GM12878 (cell line): ENCODE measurements at regions of chr7 and their contacts with region 1.

Region 1: DNA sequence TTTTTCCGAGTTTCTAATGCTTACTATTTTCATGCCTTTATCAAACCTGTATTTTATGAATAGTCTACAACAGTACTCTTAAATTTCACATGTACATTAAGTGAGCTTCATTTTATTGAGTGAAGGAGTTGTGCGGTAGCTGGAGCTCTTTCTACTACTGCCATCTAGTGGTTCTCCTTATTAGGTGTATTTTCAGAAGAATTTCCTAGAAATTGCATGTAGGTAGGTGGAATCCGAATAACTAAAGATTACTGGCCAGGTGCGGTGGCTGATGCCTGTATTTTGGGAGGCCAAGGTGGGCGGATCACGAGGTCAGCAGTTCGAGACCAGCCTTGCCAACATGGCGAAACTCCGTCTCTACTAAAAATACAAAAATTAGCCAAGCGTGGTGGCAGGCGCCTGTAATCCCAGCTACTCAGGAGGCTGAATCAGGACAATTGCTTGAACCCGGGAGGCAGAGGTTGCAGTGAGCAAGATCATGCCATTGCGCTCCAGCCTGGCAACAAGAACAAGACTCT is 38.3 kb downstream of the LRRC72 start:
- DNase-seq: peak; percentile 8
- ATAC-seq: peak; percentile 80
- H3K4me3 ChIP-seq: no peak overlapping the region
- H3K27ac ChIP-seq: no peak overlapping the region
- H3K4me1 ChIP-seq: no peaks in the 10 kb centered on the region
- H3K27me3 ChIP-seq: no peaks in the 10 kb centered on the region; a peak in 1 of 4 replicates
- CTCF ChIP-seq: peak; percentile 58 to 64 (median 61); a peak in 5 of 6 replicates
- EP300 ChIP-seq: no peak
- POLR2A ChIP-seq: no peak
- RAD21 ChIP-seq: peak; percentile 81

Region 2: DNA sequence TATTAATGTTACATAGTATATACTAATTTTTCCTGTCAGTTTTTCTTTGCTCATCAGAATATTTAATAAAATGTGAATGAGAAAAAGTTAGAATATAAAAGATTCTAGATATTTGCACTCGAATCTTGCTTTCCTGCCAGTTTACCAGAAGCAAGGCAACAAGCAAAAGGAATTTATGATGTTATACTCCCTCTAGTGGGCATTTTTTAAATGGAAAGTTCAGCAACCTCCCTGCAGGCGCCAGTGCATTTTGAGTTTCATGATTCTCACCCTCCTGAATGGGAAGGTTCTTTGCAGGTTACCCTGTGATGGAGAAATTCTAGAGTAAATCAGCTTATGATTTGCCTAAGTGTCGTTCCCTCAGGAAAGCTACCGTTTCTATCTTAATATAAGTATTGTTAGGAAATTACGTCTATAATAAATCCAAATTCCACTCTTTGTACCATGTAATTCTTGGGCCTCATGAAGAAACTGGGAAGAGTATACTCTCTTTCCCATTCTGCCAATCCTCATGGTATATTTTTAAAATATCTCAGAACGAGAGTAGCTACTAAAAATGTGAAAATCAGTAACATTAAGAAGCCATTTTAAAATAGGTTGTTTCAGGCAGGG is 493.6 kb before region 1 on chr7:
- CTCF ChIA-PET with region 1: interaction called, 17 read pairs
- POLR2A ChIA-PET with region 1: no interaction called
- RAD21 ChIA-PET with region 1: interaction called, 6 read pairs
- SMC1A ChIA-PET with region 1: interaction called, 3 read pairs
- in situ Hi-C with region 1: no loop called
- intact Hi-C with region 1: no loop called
- DNase-seq: no peak
- ATAC-seq: peak; percentile 85
- H3K4me3 ChIP-seq: no peak overlapping the region
- H3K27ac ChIP-seq: no peak overlapping the region
- H3K4me1 ChIP-seq: no peaks in the 10 kb centered on the region
- H3K27me3 ChIP-seq: no peaks in the 10 kb centered on the region
- CTCF ChIP-seq: peak; percentile 40 to 66 (median 65); a peak in 5 of 6 replicates
- EP300 ChIP-seq: no peak
- POLR2A ChIP-seq: no peak
- RAD21 ChIP-seq: peak; percentile 84

Region 3: GRCh38 chr7:16083931-16084330 is 481.0 kb before region 1 on chr7:
- CTCF ChIA-PET with region 1: interaction called, 81 read pairs
- POLR2A ChIA-PET with region 1: no interaction called
- RAD21 ChIA-PET with region 1: interaction called, 23 read pairs
- SMC1A ChIA-PET with region 1: interaction called, 3 read pairs
- in situ Hi-C with region 1: loop called (anchors 5 kb)
- intact Hi-C with region 1: no loop called
- DNase-seq: no peak
- ATAC-seq: no peak
- H3K4me3 ChIP-seq: no peak overlapping the region
- H3K27ac ChIP-seq: no peak overlapping the region
- H3K4me1 ChIP-seq: no peaks in the 10 kb centered on the region
- H3K27me3 ChIP-seq: no peaks in the 10 kb centered on the region
- CTCF ChIP-seq: no peak
- EP300 ChIP-seq: no peak
- POLR2A ChIP-seq: no peak
- RAD21 ChIP-seq: no peak

Region 4: DNA sequence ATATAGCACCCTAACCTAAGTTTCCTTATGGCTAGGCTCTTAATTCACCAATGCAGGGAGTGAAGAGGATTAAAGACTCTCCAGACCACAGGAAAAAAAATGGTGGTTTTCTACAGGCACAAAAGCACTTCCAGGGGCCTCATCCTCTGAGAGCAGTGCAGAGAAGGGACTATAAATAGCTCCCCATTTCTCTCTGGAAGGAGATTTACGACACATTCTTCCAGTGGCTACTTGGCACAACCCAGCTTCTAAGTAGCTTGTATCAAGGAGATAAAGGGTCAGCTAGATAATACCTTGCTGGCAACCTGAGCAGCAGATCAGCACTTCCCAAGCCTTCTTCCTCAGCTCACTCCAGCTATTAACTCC is 217.2 kb before region 1 on chr7:
- CTCF ChIA-PET with region 1: no interaction called
- POLR2A ChIA-PET with region 1: no interaction called
- RAD21 ChIA-PET with region 1: no interaction called
- SMC1A ChIA-PET with region 1: no interaction called
- in situ Hi-C with region 1: no loop called
- intact Hi-C with region 1: no loop called
- DNase-seq: no peak
- ATAC-seq: no peak
- H3K4me3 ChIP-seq: no peak overlapping the region
- H3K27ac ChIP-seq: no peak overlapping the region
- H3K4me1 ChIP-seq: no peaks in the 10 kb centered on the region
- H3K27me3 ChIP-seq: no peaks in the 10 kb centered on the region
- CTCF ChIP-seq: no peak
- EP300 ChIP-seq: no peak
- POLR2A ChIP-seq: no peak
- RAD21 ChIP-seq: no peak

Region 5: DNA sequence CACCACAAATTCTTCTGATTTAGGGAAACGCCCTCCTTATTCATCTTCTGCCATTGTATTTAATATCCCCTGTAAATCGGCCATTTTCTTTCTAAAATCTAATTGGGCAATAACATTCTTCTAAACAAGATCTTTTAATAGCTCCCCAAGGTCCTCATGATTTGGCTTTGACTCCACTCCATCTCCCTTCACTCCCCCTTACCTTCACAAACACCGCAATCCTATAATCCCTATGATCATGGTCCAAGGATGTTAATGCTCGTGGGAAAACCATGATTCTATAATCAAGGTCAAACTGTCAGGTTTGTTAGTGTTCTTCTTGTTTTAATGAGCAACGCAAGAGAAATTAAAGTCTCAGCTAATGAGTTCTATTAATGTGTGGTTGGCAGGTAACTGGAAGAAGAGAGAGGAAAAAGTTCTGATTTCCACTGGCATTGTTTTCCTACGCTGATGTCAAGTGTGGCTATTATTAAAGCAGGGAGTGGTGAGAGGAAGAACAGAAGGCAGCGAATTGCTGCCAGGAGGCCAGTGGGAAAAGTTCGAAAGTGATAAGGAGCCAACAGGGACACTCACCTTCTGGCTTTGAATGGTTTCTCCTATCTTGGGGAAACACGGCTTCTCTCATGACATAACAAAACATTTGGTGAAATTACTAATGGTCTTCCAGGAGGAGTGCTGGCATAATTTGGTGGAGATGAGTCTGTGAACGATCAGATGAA is 10.3 kb before region 1 on chr7:
- CTCF ChIA-PET with region 1: interaction called, 46 read pairs
- POLR2A ChIA-PET with region 1: no interaction called
- RAD21 ChIA-PET with region 1: interaction called, 6 read pairs
- SMC1A ChIA-PET with region 1: interaction called, 7 read pairs
- in situ Hi-C with region 1: no loop called
- intact Hi-C with region 1: no loop called
- DNase-seq: no peak
- ATAC-seq: no peak
- H3K4me3 ChIP-seq: no peak overlapping the region
- H3K27ac ChIP-seq: no peak overlapping the region
- H3K4me1 ChIP-seq: no peaks in the 10 kb centered on the region
- H3K27me3 ChIP-seq: no peaks in the 10 kb centered on the region
- CTCF ChIP-seq: no peak
- EP300 ChIP-seq: no peak
- POLR2A ChIP-seq: no peak
- RAD21 ChIP-seq: no peak